GM18951 (cell line): ENCODE measurements at regions of chr14 and their contacts with region 1.

Region 1: GRCh38 chr14:73825551-73826188 is 26.0 kb upstream of the PTGR2 start:
- POLR2A ChIP-seq: no peak

Region 2: GRCh38 chr14:72883961-72884360 is 941.7 kb before region 1 on chr14:
- in situ Hi-C with region 1: no loop called
- POLR2A ChIP-seq: no peak

Region 3: DNA sequence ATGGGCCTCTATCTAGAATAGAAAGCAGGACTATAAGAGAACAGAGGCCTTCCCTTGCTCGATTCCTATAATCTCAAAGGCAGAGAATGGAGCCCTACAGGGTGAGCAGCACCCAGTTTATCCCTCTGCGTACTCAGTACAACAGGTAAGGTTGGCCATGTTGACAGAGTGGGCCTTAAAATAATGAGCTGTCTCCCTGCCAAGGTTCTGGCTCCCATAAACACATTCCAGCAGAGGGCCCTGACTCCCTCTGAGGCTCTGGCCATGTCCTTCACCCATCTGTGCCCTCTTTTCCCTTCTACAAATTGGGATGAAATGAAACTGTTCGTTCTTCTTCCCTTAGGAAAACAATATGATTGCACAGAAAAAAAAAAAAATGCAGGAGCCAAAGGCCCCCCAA is 94.6 kb before region 1 on chr14:
- in situ Hi-C with region 1: loop called (anchors 5 kb)
- POLR2A ChIP-seq: no peak

Region 4: GRCh38 chr14:73741386-73741875 is 84.2 kb before region 1 on chr14:
- in situ Hi-C with region 1: no loop called
- POLR2A ChIP-seq: no peak